Activated naive CD4-positive, alpha-beta T cell treated with anti-CD3 and anti-CD28 coated beads, Interleukin-2, amount 10 ng/mL, durations not matched to agents 7 days and 5 days (primary cell): ENCODE measurements at regions of chr14 and their contacts with region 1.

Region 1: GRCh38 chr14:33839193-33840076 is 111.4 kb downstream of the EGLN3 start:
- DNase-seq: peak; percentile 72
- H3K4me3 Mint-ChIP-seq: no peak overlapping the region
- H3K27ac Mint-ChIP-seq: no peak overlapping the region
- H3K4me1 Mint-ChIP-seq: peaks cover 9% of the 10 kb centered on the region
- H3K27me3 Mint-ChIP-seq: peaks cover 11% of the 10 kb centered on the region

Region 2: GRCh38 chr14:34098045-34098984 is 258.9 kb after region 1 on chr14:
- CTCF ChIA-PET with region 1: interaction called, 92 read pairs
- DNase-seq: peak; percentile 52
- H3K4me3 Mint-ChIP-seq: no peak overlapping the region
- H3K27ac Mint-ChIP-seq: peak overlapping the region; percentile 46
- H3K4me1 Mint-ChIP-seq: peaks cover 35% of the 10 kb centered on the region
- H3K27me3 Mint-ChIP-seq: peaks cover 33% of the 10 kb centered on the region

Region 3: DNA sequence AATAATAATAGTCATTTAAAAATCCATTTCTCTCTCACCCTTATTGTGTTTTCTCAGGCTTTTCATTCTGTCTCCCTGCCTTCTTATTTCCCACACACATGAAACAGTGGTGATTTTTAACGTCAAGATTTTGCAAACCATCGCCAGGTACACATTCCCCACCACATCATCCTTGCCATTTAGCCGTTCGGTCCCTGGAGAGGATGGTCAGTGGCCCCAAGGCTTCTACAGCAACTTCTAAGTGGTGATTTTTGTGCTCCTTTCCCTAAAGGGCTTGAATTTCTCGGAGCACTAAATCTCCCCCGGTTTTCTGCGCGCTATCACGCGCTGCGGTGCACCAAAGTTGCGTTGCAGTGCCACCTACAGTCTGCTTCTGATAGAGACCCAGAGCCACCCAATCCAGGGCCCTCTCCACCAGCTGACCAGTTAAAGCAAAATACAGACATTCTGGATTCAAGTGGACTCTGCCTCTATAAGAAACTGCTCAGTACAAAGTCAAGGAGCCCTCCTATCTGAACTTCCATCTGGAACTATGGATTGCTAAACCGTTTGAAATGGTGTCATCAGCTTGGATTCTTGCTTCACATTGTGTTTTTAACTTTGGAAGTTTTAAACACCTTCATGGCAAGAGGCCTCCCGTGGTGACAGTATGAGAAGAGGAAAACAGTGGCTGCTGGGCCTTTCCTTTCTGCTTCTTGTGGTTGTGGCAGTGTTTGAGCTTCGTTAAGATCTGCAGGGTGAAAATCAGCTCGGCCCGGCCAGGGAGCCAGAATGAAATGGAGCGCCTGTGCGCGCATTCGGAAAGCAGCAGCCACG is 388.6 kb after region 1 on chr14:
- CTCF ChIA-PET with region 1: interaction called, 24 read pairs
- DNase-seq: peak; percentile 70
- H3K4me3 Mint-ChIP-seq: no peak overlapping the region
- H3K27ac Mint-ChIP-seq: no peak overlapping the region
- H3K4me1 Mint-ChIP-seq: peaks cover 4% of the 10 kb centered on the region
- H3K27me3 Mint-ChIP-seq: peaks cover 16% of the 10 kb centered on the region

Region 4: GRCh38 chr14:34322940-34323418 is 483.5 kb after region 1 on chr14:
- CTCF ChIA-PET with region 1: interaction called, 11 read pairs
- DNase-seq: peak; percentile 78
- H3K4me3 Mint-ChIP-seq: no peak overlapping the region
- H3K27ac Mint-ChIP-seq: no peak overlapping the region
- H3K4me1 Mint-ChIP-seq: no peaks in the 10 kb centered on the region
- H3K27me3 Mint-ChIP-seq: no peaks in the 10 kb centered on the region